ENCODE measurements at regions of chr1 and their contacts with region 1.

Region 1: DNA sequence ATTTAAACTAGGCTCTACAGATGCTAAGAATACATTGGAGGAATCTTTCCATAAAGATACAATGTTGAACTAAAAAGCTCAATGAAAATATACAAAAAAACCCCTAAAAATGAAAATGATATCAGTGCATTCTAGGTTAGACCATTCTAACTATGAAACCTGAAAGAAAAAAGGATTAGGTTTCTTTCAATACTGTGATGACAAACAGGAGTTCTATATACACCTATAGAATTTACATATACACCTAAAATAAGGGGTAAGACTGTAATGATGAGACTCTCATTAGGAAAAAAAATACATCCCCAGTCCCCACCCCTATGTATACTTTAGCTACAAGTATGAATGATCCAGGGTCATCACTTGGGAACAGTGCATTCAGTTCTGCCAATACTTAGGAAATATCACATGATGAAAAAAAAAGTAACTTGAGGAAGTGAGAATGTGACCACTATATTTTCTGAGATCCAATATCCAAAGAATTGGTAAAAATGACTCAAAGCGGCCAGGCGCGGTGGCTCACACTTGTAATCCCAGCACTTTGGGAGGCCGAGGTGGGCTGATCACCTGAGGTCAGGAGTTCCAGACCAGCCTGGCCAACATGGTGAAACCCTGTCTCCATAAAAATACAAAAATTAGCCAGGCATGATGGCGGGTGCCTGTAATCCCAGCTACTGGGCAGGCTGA is 26.3 kb downstream of the SELENOF start:
- DNase-seq: no peak
- ATAC-seq: no peak

Region 2: DNA sequence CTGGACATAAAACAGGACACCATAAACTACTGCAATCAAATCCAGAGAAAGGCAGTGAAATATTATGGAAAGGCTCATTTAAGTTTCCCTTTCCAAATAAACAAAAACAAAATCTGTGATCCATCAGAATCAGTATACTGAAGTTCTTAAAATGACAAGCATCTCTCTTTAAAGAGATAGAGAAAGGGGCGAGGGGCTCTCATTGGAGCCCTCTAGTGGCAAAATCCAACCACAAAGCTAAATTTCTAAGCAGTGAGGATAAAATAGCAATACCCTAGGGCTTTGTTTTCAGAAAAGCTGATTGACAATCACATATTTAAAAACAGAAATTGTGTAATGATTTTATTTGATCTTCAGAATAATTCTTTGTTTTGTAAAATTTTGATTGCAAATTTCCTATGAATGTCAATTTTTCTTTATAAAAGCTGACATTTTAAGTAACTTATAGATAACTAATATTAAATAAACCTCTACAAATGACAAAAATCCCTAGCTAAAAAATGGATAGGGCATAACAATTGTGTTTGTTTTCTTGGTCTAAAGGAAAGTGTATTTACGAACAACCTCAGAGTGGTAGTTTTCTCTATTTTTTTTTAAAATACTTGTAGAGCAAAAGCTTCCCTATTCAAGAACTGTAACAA is 869.2 kb before region 1 on chr1:
- intact Hi-C with region 1: no loop called
- DNase-seq: no peak
- ATAC-seq: peak; percentile 64

Region 3: GRCh38 chr1:86922445-86922844 is 34.8 kb after region 1 on chr1:
- intact Hi-C with region 1: loop called (anchors 2 kb)
- DNase-seq: no peak
- ATAC-seq: no peak

Region 4: DNA sequence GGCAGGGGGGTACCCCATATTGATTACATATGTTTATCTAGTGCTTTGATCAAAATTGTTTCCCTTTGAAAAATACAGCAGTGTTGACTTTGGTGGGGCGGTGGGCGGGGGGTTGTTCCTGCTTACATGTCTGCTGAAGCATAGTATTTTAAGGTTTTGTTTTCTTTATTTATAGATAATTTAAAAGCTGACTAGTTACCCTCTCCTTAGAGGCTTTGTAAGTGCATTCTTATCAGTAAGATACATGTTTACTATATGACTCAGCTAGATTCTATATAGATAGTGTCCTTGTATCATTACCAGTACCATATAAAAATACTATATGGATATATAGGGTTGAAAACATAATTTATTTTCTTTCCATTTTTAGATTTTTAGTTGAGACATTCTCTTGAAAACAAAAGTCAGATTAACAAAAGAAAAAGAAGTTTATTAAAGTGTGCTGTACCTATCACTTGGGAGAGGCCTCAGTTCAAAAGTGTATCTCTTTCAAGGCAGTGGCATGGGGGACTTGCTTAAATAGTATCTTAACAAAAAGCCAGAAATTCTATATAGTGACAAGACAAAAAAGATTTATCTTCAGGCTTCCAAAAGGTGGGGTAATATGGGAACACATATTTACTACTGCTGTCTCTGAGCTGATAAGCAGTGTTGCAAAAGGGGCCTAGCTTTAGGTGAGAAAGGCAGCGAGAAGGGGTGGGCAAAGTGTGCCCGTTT is 105.8 kb after region 1 on chr1:
- intact Hi-C with region 1: no loop called
- DNase-seq: no peak
- ATAC-seq: no peak

Measured in sciatic nerve (tissue), 2 donors.